ENCODE measurements at regions of chr4 and their contacts with region 1.

Region 1: DNA sequence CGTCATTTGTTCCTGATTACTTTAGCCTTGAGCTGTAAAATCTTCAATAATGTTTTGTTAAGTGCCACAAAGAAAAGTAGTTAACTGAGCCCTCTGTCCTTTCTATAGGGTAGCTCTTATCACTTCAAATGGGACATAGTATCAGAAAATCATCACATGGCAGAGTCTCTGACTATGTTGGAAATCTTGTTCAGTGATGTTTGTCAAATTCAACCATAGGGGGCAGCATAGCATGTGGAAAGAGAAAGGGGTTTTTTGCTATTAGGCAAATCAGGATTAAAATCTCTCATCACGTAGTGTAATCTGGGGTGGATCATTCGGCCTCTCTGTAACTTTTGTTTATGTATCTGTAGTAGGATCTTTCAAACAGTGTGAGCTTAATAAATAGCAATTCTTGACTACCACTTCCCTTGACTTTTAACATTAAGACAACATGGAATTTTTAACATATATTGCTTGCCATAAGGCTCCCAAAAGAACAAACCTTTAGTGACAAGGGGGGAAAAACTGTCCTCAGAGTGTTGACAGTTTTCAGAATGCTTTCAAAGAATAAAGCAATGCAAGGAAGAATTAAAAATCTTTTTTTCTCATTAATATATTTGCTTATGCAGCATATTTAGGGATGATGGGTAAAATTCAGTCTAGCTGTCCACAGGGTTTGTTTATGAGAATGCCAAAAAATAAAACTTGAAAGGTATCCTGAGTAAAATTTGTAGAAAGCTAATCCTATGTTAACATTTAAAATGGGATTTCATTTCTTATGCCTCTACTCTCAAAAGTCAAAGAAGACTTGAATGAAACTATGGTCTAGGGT is 127.2 kb downstream of the FBXW7 start:
- DNase-seq: peak; percentile 23
- ATAC-seq: peak; percentile 66
- H3K4me3 Mint-ChIP-seq: no peak overlapping the region
- H3K27ac Mint-ChIP-seq: no peak overlapping the region
- H3K4me1 Mint-ChIP-seq: peaks cover 21% of the 10 kb centered on the region
- H3K27me3 Mint-ChIP-seq: no peaks in the 10 kb centered on the region
- CTCF ChIP-seq: peak; percentile 73

Region 2: GRCh38 chr4:152385551-152385950 is 23.2 kb before region 1 on chr4:
- CTCF ChIA-PET with region 1: interaction called, 13 read pairs
- POLR2A ChIA-PET with region 1: interaction called, 3 read pairs
- intact Hi-C with region 1: no loop called
- DNase-seq: no peak
- ATAC-seq: no peak
- H3K4me3 Mint-ChIP-seq: no peak overlapping the region
- H3K27ac Mint-ChIP-seq: no peak overlapping the region
- H3K4me1 Mint-ChIP-seq: peaks cover 23% of the 10 kb centered on the region
- H3K27me3 Mint-ChIP-seq: no peaks in the 10 kb centered on the region
- CTCF ChIP-seq: peak; percentile 61

Region 3: GRCh38 chr4:152398060-152398459 is 10.7 kb before region 1 on chr4:
- CTCF ChIA-PET with region 1: interaction called, 15 read pairs
- POLR2A ChIA-PET with region 1: no interaction called
- intact Hi-C with region 1: no loop called
- DNase-seq: no peak
- ATAC-seq: no peak
- H3K4me3 Mint-ChIP-seq: no peak overlapping the region
- H3K27ac Mint-ChIP-seq: no peak overlapping the region
- H3K4me1 Mint-ChIP-seq: peaks cover 34% of the 10 kb centered on the region
- H3K27me3 Mint-ChIP-seq: no peaks in the 10 kb centered on the region
- CTCF ChIP-seq: peak; percentile 19

Region 4: DNA sequence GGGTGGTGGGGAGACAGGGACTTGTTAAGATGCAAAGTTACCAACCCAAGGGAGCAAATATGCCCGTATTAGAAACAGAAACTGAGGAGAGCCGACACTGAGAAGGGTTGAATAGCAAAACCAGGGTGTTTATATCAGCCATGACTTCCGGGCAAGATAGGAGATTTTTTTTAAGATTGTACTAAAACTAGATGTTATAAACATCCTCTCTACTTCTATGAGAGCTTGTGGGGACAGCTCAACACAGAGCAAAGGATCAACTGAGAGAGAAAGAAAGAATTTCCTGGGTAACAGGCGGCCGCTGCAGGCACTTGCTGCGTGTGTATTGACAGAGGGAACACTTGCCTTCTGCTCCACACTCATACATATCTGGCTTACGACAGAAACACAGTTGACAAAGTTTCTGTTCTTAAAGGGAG is 176.3 kb after region 1 on chr4:
- CTCF ChIA-PET with region 1: no interaction called
- POLR2A ChIA-PET with region 1: no interaction called
- intact Hi-C with region 1: no loop called
- DNase-seq: no peak
- ATAC-seq: no peak
- H3K4me3 Mint-ChIP-seq: peak overlapping the region; percentile 31
- H3K27ac Mint-ChIP-seq: peak overlapping the region; percentile 76
- H3K4me1 Mint-ChIP-seq: no peaks in the 10 kb centered on the region
- H3K27me3 Mint-ChIP-seq: peaks cover under 1% of the 10 kb centered on the region
- CTCF ChIP-seq: no peak

Region 5: DNA sequence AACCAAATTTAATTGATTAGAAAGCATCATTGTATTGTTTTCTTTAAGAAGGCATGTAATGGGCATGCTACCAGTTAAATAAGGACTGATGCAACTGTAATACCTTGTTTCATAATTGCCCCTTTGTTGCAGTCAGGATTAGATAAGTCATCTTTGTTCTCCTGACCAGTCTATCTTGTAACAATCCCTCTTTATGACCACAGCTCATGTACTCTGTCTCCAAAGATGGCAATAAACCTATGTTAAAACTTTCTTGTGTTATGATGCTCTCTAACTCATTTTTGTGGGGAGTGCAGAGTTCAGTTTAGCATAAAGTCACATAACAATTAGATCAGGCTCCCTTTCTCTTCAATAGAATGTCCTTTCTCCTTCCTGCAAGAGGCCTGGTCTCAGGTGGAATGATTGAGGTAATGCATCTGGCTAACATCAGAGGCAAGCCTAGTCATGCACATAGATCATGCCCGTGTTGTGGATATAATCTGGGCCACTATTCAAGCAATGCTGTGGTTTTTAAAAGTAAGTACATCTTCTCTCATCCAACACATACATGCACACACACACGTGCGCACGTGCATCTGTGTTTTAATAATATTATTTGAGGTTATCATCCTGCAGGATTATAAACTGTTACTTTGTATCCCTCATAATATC is 225.5 kb after region 1 on chr4:
- CTCF ChIA-PET with region 1: interaction called, 15 read pairs
- POLR2A ChIA-PET with region 1: no interaction called
- intact Hi-C with region 1: loop called (anchors 10 kb)
- DNase-seq: no peak
- ATAC-seq: no peak
- H3K4me3 Mint-ChIP-seq: no peak overlapping the region
- H3K27ac Mint-ChIP-seq: no peak overlapping the region
- H3K4me1 Mint-ChIP-seq: peaks cover 17% of the 10 kb centered on the region
- H3K27me3 Mint-ChIP-seq: no peaks in the 10 kb centered on the region
- CTCF ChIP-seq: no peak

Region 6: GRCh38 chr4:152640058-152640833 is 231.5 kb after region 1 on chr4:
- CTCF ChIA-PET with region 1: interaction called, 20 read pairs
- POLR2A ChIA-PET with region 1: no interaction called
- intact Hi-C with region 1: loop called (anchors 10 kb)
- DNase-seq: no peak
- ATAC-seq: no peak
- H3K4me3 Mint-ChIP-seq: no peak overlapping the region
- H3K27ac Mint-ChIP-seq: no peak overlapping the region
- H3K4me1 Mint-ChIP-seq: peaks cover 34% of the 10 kb centered on the region
- H3K27me3 Mint-ChIP-seq: no peaks in the 10 kb centered on the region
- CTCF ChIP-seq: peak; percentile 94

Region 7: GRCh38 chr4:152735396-152735859 is 326.7 kb after region 1 on chr4:
- CTCF ChIA-PET with region 1: interaction called, 9 read pairs
- POLR2A ChIA-PET with region 1: no interaction called
- intact Hi-C with region 1: loop called (anchors 2 kb)
- DNase-seq: no peak
- ATAC-seq: peak; percentile 27
- H3K4me3 Mint-ChIP-seq: no peak overlapping the region
- H3K27ac Mint-ChIP-seq: no peak overlapping the region
- H3K4me1 Mint-ChIP-seq: no peaks in the 10 kb centered on the region
- H3K27me3 Mint-ChIP-seq: peaks cover 3% of the 10 kb centered on the region
- CTCF ChIP-seq: peak; percentile 75